Colonic mucosa (tissue), 4 donors: ENCODE measurements at regions of chr10 and their contacts with region 1.

Region 1: GRCh38 chr10:129971381-129972144 is 7.5 kb upstream of the EBF3 start:
- DNase-seq: peak; percentile 53
- H3K4me3 ChIP-seq: no peak overlapping the region
- H3K27ac ChIP-seq: no peak overlapping the region
- H3K4me1 ChIP-seq: peaks cover 3% of the 10 kb centered on the region
- H3K27me3 ChIP-seq: peaks cover 70% of the 10 kb centered on the region
- CTCF ChIP-seq: no peak

Region 2: GRCh38 chr10:128263891-128264688 is 1707.5 kb before region 1 on chr10:
- intact Hi-C with region 1: loop called (anchors 10 kb)
- DNase-seq: peak; percentile 60
- H3K4me3 ChIP-seq: no peak overlapping the region
- H3K27ac ChIP-seq: no peak overlapping the region
- H3K4me1 ChIP-seq: no peaks in the 10 kb centered on the region
- H3K27me3 ChIP-seq: no peaks in the 10 kb centered on the region
- CTCF ChIP-seq: peak; percentile 56

Region 3: DNA sequence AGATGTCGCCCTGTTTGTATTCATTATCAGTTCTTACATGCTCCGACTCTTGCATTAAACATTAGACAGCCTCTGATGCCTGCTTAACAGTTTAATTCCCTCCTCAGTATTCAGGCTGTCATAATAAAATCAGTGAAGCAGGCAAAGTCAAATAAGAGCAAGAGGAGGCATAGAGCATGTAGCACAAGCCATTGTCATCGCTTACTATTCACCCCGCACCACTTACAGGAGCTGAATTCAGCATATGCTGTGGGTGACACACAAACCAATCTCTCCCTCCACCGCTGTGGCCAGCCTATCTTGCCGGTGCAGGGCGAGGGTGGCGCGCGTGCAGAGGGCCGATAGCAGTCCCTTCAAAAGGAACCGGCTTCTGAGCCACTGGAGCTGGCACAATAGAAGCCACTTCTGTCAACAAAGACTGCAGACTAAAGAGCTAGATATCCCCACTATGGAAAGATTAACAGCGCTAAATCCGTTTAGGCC is 937.7 kb before region 1 on chr10:
- intact Hi-C with region 1: loop called (anchors 2 kb)
- DNase-seq: no peak
- H3K4me3 ChIP-seq: no peak overlapping the region
- H3K27ac ChIP-seq: no peak overlapping the region
- H3K4me1 ChIP-seq: no peaks in the 10 kb centered on the region
- H3K27me3 ChIP-seq: no peaks in the 10 kb centered on the region
- CTCF ChIP-seq: no peak

Region 4: GRCh38 chr10:130064783-130065182 is 93.2 kb after region 1 on chr10:
- intact Hi-C with region 1: no loop called
- DNase-seq: no peak
- H3K4me3 ChIP-seq: no peak overlapping the region
- H3K27ac ChIP-seq: no peak overlapping the region
- H3K4me1 ChIP-seq: no peaks in the 10 kb centered on the region
- H3K27me3 ChIP-seq: no peaks in the 10 kb centered on the region
- CTCF ChIP-seq: no peak